Upper lobe of right lung (tissue), 1 donor: ENCODE measurements at regions of chr16 and their contacts with region 1.

Region 1: DNA sequence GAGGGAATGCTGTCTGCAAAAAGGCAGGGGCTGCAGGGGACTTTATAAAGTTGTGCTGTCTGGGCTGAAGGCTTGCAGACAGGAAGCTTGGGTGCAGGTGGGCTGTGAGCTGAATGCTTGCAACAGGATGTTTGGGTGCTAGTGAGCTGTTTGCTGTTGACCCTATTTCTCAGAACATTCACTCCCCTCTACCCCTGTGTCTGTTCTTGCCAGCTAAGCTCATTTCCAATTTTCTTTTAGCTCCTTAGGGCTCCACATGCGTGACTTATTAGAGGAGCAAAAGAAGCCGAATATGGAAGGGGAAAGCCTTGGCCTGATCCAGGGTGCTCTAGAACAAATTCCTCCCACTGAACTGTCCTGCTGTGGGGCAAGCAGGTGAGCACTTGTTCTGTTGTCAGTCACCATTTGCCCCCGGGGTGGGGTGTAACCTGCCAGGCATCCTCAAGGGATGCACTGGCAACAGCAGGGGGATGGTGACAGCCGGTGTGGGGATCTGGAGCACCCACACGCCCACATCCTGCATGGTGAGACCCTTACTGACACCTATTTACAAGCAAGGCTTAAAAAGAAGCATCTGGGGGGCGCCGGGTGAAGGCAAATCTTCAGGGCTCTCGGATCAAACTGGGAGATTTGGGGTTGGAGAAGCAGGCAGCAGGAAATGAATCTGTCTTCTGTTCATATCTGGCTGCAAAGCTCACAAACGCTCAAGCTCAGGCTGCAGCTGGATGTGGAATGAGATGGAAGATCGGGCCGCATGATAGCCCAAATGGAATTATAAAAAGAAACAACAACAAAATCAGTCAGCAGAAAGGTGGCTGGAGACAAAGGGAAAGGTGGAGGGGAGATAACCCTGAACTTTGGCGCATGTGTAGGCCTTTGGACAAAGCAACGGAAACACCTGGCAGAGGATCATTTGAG is 21.1 kb upstream of the NUP93 start:
- DNase-seq: no peak
- ATAC-seq: no peak
- H3K4me3 ChIP-seq: no peak overlapping the region
- H3K27ac ChIP-seq: peak overlapping the region; percentile 6
- H3K4me1 ChIP-seq: no peaks in the 10 kb centered on the region
- H3K27me3 ChIP-seq: no peaks in the 10 kb centered on the region
- CTCF ChIP-seq: no peak

Region 2: GRCh38 chr16:56576585-56577293 is 132.0 kb before region 1 on chr16:
- intact Hi-C with region 1: loop called (anchors 10 kb)
- DNase-seq: peak; percentile 93
- ATAC-seq: peak; percentile 100
- H3K4me3 ChIP-seq: no peak overlapping the region
- H3K27ac ChIP-seq: no peak overlapping the region
- H3K4me1 ChIP-seq: no peaks in the 10 kb centered on the region
- H3K27me3 ChIP-seq: no peaks in the 10 kb centered on the region
- CTCF ChIP-seq: peak; percentile 82

Region 3: DNA sequence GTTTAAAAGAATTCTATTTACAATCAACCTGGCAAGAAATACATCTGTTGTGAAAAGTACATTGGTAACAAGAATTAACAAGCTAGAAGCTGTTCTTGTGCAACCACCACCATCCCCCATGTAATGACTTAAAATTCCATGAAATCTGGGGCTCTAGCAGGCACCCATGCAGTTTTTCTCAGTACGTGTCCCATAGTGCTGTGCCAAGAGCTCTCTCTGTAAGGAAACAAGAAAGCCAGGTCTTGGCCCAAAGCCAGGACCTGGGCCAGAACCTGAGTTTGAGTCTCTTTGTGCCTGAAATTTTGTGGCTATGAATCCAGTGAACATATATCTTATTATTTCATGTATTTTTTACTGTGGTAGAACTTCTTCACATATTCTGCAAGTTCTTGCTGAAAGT is 67.8 kb after region 1 on chr16:
- intact Hi-C with region 1: no loop called
- DNase-seq: no peak
- ATAC-seq: no peak
- H3K4me3 ChIP-seq: no peak overlapping the region
- H3K27ac ChIP-seq: no peak overlapping the region
- H3K4me1 ChIP-seq: peaks cover 15% of the 10 kb centered on the region
- H3K27me3 ChIP-seq: no peaks in the 10 kb centered on the region
- CTCF ChIP-seq: no peak

Region 4: GRCh38 chr16:56888806-56889205 is 180.0 kb after region 1 on chr16:
- intact Hi-C with region 1: no loop called
- DNase-seq: no peak
- ATAC-seq: peak; percentile 62
- H3K4me3 ChIP-seq: no peak overlapping the region
- H3K27ac ChIP-seq: no peak overlapping the region
- H3K4me1 ChIP-seq: no peaks in the 10 kb centered on the region
- H3K27me3 ChIP-seq: no peaks in the 10 kb centered on the region
- CTCF ChIP-seq: no peak